Calu3 (cell line): ENCODE measurements at regions of chr18 and their contacts with region 1.

Region 1: GRCh38 chr18:3281456-3282400 is 19.8 kb downstream of the MYL12B start:
- DNase-seq: no peak
- H3K4me3 Mint-ChIP-seq: no peak overlapping the region
- H3K27ac Mint-ChIP-seq: peak overlapping the region; percentile 5
- H3K4me1 Mint-ChIP-seq: peaks cover 21% of the 10 kb centered on the region
- H3K27me3 Mint-ChIP-seq: no peaks in the 10 kb centered on the region
- CTCF ChIP-seq: peak; percentile 31

Region 2: GRCh38 chr18:3447895-3448837 is 166.4 kb after region 1 on chr18:
- CTCF ChIA-PET with region 1: interaction called, 3 read pairs
- intact Hi-C with region 1: loop called (anchors 2 kb)
- DNase-seq: peak; percentile 97
- H3K4me3 Mint-ChIP-seq: peak overlapping the region; percentile 92
- H3K27ac Mint-ChIP-seq: peak overlapping the region; percentile 95
- H3K4me1 Mint-ChIP-seq: peaks cover 7% of the 10 kb centered on the region
- H3K27me3 Mint-ChIP-seq: no peaks in the 10 kb centered on the region
- CTCF ChIP-seq: no peak

Region 3: GRCh38 chr18:3585656-3586509 is 304.2 kb after region 1 on chr18:
- CTCF ChIA-PET with region 1: no interaction called
- intact Hi-C with region 1: loop called (anchors 1 kb)
- DNase-seq: peak; percentile 91
- H3K4me3 Mint-ChIP-seq: no peak overlapping the region
- H3K27ac Mint-ChIP-seq: peak overlapping the region; percentile 73
- H3K4me1 Mint-ChIP-seq: peaks cover 34% of the 10 kb centered on the region
- H3K27me3 Mint-ChIP-seq: no peaks in the 10 kb centered on the region
- CTCF ChIP-seq: peak; percentile 89

Region 4: DNA sequence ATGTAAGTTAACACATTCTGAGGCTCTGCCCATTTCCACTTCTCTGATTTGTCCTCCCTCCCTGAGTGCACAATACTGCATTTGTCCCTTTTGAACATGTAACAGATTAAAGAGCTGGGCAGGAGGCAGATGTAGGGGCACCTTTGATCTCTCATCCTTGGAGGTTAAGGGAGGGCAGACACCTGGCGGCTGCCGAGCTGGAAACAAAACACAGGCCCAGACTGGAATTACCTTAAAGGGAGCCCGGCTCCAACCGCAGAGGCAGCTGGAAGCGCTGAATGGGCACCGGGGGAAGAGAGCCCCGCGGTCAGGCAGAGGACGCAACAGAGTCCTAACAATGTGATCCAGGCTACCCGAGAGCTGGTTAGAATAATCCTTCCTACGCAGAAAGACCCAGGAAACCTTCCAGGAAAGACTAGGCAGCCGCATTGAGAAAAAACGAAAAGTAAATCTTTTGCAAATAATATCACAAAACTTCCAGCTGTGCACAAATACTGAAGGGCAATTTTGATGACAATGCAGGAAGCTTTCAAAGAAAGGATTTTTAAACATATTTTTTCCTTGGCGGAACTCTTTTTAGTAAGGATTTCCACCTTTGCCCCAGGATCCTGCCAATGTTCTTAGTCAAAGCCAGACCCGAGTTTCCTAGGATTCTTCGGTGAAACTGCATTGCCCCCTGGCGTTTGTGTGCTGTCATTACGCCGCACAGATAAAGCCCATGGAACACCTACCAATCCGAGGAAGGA is 384.2 kb after region 1 on chr18:
- CTCF ChIA-PET with region 1: interaction called, 12 read pairs
- intact Hi-C with region 1: loop called (anchors 1 kb)
- DNase-seq: peak; percentile 88
- H3K4me3 Mint-ChIP-seq: peak overlapping the region; percentile 55
- H3K27ac Mint-ChIP-seq: peak overlapping the region; percentile 83
- H3K4me1 Mint-ChIP-seq: peaks cover 40% of the 10 kb centered on the region
- H3K27me3 Mint-ChIP-seq: no peaks in the 10 kb centered on the region
- CTCF ChIP-seq: peak; percentile 93

Region 5: GRCh38 chr18:3869848-3870247 is 588.1 kb after region 1 on chr18:
- CTCF ChIA-PET with region 1: interaction called, 3 read pairs
- intact Hi-C with region 1: loop called (anchors 5 kb)
- DNase-seq: peak; percentile 7
- H3K4me3 Mint-ChIP-seq: no peak overlapping the region
- H3K27ac Mint-ChIP-seq: no peak overlapping the region
- H3K4me1 Mint-ChIP-seq: peaks cover 16% of the 10 kb centered on the region
- H3K27me3 Mint-ChIP-seq: no peaks in the 10 kb centered on the region
- CTCF ChIP-seq: peak; percentile 55